Pancreas (tissue), 10 donors: ENCODE measurements at regions of chr4 and their contacts with region 1.

Region 1: DNA sequence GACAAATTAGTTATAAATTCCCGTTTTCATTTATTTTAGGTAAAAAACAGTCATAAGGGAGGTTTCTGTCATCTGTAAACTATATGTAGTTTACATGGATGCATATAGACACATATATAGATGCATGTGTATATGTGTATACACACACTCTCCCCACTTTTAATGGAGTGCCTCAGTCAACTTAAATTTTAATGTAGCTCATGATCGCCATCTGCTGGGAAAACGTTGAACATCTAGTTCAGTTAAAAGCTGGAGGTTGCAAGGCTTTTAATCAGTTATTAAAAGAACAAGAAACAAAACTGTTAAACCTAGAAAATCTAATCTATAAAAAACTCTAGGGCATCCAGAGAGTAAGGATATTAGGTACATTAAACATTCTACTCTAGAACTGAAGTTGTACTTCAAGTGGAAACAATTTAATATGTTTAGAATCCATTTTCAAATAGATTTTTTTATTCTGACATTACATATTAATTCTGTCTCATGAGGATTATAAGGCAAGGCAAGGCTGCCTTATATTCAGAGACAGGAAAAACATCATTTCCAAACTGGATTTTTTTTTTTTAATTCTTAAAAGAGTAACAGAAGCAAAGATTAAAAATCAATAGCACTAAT is 122.6 kb downstream of the SHISA3 start:
- DNase-seq: peak in 2 of 6 donors; percentile 9 to 53
- ATAC-seq: peak in 3 of 4 donors; percentile 74 to 84 (median 74)
- H3K4me3 ChIP-seq: no peak overlapping the region
- H3K27ac ChIP-seq: no peak overlapping the region
- H3K4me1 ChIP-seq: no peaks in the 10 kb centered on the region
- H3K27me3 ChIP-seq: no peaks in the 10 kb centered on the region
- CTCF ChIP-seq: peak; percentile 26 to 63 (median 46)

Region 2: GRCh38 chr4:41865306-41865980 is 654.5 kb before region 1 on chr4:
- intact Hi-C with region 1: no loop called
- DNase-seq: no peak
- ATAC-seq: peak in 2 of 4 donors; percentile 44 to 65
- H3K4me3 ChIP-seq: no peak overlapping the region
- H3K27ac ChIP-seq: no peak overlapping the region
- H3K4me1 ChIP-seq: no peaks in the 10 kb centered on the region
- H3K27me3 ChIP-seq: peaks cover 4 to 28% (median 15%) of the 10 kb centered on the region in 4 donors
- CTCF ChIP-seq: no peak

Region 3: GRCh38 chr4:42359711-42360110 is 160.2 kb before region 1 on chr4:
- intact Hi-C with region 1: loop called in 2 of 3 experiments (anchors 10 kb)
- DNase-seq: no peak
- ATAC-seq: peak in 2 of 4 donors; percentile 30 to 40
- H3K4me3 ChIP-seq: peak overlapping the region in 1 of 4 donors; percentile 15
- H3K27ac ChIP-seq: no peak overlapping the region
- H3K4me1 ChIP-seq: no peaks in the 10 kb centered on the region
- H3K27me3 ChIP-seq: no peaks in the 10 kb centered on the region
- CTCF ChIP-seq: no peak